Natural killer cell (primary cell): ENCODE measurements at regions of chr5 and their contacts with region 1.

Region 1: GRCh38 chr5:119452373-119453039 is at the start of gene HSD17B4:
- DNase-seq: peak; percentile 62 to 87
- ATAC-seq: peak; percentile 93 to 96 (median 95)
- H3K4me3 ChIP-seq: peak within 1 kb of the TSS; percentile 84
- H3K4me3 Mint-ChIP-seq: peak within 1 kb of the TSS; percentile 99
- H3K27ac ChIP-seq: peak within 1 kb of the TSS; percentile 76
- H3K27ac Mint-ChIP-seq: peak within 1 kb of the TSS; percentile 80 to 92
- H3K4me1 ChIP-seq: peaks cover 12% of the 10 kb centered on the region
- H3K4me1 Mint-ChIP-seq: peaks cover 17 to 29% of the 10 kb centered on the region in 2 donors
- H3K27me3 ChIP-seq: no peaks in the 10 kb centered on the region
- H3K27me3 Mint-ChIP-seq: peaks cover 11 to 17% of the 10 kb centered on the region in 2 donors
- CTCF ChIP-seq: no peak
- total RNA-seq, gene HSD17B4: 38.2 to 76.9 (median 51.9) TPM

Region 2: GRCh38 chr5:119070828-119071572 is 381.5 kb before region 1 on chr5 and contains the start of gene DMXL1:
- intact Hi-C with region 1: loop called (anchors 1 kb)
- DNase-seq: peak; percentile 96 to 99
- ATAC-seq: peak; percentile 87 to 96 (median 89)
- H3K4me3 ChIP-seq: peak within 1 kb of the TSS; percentile 79
- H3K4me3 Mint-ChIP-seq: peak within 1 kb of the TSS; percentile 100
- H3K27ac ChIP-seq: peak within 1 kb of the TSS; percentile 93
- H3K27ac Mint-ChIP-seq: peak within 1 kb of the TSS; percentile 98 to 100
- H3K4me1 ChIP-seq: peaks cover 19% of the 10 kb centered on the region
- H3K4me1 Mint-ChIP-seq: peaks cover 39 to 41% of the 10 kb centered on the region in 2 donors
- H3K27me3 ChIP-seq: no peaks in the 10 kb centered on the region
- H3K27me3 Mint-ChIP-seq: no peaks in the 10 kb centered on the region
- CTCF ChIP-seq: no peak
- total RNA-seq, gene DMXL1: 36.7 to 43.0 (median 39.9) TPM